ENCODE measurements at regions of chr6 and their contacts with region 1.

Region 1: DNA sequence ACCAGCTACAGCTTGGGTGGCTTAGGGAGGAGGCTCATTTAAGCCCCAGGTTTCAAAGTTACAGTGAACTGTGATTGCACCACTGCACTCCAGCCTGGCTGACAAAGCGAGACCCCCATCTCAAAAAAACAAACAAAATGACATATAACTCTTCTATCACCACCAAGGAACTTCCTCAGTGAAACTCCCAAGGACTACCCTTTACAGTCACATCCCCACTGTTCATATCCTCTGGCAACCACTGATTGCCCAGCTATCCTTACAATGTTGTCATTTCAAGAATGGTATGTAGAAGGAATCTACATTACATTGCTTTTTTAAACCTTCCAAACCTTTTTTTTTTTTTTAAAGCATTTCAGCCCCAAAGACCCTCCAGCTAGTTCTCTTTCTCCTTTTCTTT is 123.1 kb upstream of the CARMIL1 start:
- DNase-seq: no peak
- H3K4me3 ChIP-seq: no peak overlapping the region
- H3K27me3 ChIP-seq: no peaks in the 10 kb centered on the region
- CTCF ChIP-seq: no peak

Region 2: DNA sequence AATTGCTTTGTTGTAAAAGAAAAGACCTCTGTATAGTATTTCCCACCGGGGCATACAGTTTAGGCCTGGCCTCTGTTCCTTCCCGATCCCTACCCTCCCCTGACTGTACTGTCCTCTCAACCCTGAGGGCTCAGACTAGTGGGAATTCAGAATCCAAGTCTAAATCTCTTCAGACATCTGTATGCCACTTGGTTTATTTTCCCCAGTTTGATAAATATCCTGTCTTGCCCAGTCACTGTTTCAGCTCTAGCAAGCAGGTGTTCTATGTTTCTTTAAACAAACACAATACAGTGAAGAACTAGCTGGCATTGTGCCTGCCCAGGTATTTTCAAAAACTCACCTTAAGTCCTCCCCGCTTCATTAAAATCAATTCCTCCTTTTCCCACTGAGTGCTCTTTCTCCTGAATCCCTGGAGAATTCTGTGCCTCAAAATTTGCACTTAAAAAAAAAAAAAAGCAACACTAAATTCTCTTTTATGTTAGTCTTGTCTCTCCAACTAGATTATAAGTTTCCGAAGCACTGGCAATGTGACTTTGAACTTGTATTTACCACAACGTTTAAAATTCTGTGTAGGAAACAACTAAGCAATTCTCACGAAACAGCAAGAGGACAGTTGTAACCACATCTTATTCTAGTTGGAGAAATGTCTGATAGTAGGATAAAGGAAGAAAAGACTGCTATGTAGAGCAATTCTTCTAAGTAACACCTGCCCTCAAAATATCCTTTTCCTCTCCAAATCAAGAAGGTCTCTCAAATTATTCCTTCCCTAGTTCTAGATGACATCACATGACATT is 11.1 kb after region 1 on chr6:
- CTCF ChIA-PET with region 1: interaction called, 12 read pairs
- POLR2A ChIA-PET with region 1: no interaction called
- DNase-seq: no peak
- H3K4me3 ChIP-seq: no peak overlapping the region
- H3K27me3 ChIP-seq: no peaks in the 10 kb centered on the region
- CTCF ChIP-seq: no peak

Region 3: GRCh38 chr6:25178336-25179035 is 22.4 kb after region 1 on chr6:
- CTCF ChIA-PET with region 1: no interaction called
- POLR2A ChIA-PET with region 1: no interaction called
- DNase-seq: no peak
- H3K4me3 ChIP-seq: no peak overlapping the region
- H3K27me3 ChIP-seq: no peaks in the 10 kb centered on the region
- CTCF ChIP-seq: no peak